WTC11 (cell line): ENCODE measurements at regions of chr17 and their contacts with region 1.

Region 1: GRCh38 chr17:29219378-29220047 is 27.1 kb upstream of the CRYBA1 start:
- DNase-seq: peak; percentile 89
- ATAC-seq: peak; percentile 97
- H3K4me3 Mint-ChIP-seq: no peak overlapping the region
- H3K27ac Mint-ChIP-seq: no peak overlapping the region
- H3K4me1 Mint-ChIP-seq: peaks cover 6% of the 10 kb centered on the region
- H3K27me3 Mint-ChIP-seq: no peaks in the 10 kb centered on the region
- CTCF ChIP-seq: peak; percentile 82

Region 2: GRCh38 chr17:29205047-29205446 is 14.5 kb before region 1 on chr17:
- CTCF ChIA-PET with region 1: interaction called, 28 read pairs
- POLR2A ChIA-PET with region 1: no interaction called
- DNase-seq: no peak
- ATAC-seq: no peak
- H3K4me3 Mint-ChIP-seq: no peak overlapping the region
- H3K27ac Mint-ChIP-seq: no peak overlapping the region
- H3K4me1 Mint-ChIP-seq: peaks cover 21% of the 10 kb centered on the region
- H3K27me3 Mint-ChIP-seq: no peaks in the 10 kb centered on the region
- CTCF ChIP-seq: no peak